Esophagus muscularis mucosa (tissue), 4 donors: ENCODE measurements at regions of chr9 and their contacts with region 1.

Region 1: DNA sequence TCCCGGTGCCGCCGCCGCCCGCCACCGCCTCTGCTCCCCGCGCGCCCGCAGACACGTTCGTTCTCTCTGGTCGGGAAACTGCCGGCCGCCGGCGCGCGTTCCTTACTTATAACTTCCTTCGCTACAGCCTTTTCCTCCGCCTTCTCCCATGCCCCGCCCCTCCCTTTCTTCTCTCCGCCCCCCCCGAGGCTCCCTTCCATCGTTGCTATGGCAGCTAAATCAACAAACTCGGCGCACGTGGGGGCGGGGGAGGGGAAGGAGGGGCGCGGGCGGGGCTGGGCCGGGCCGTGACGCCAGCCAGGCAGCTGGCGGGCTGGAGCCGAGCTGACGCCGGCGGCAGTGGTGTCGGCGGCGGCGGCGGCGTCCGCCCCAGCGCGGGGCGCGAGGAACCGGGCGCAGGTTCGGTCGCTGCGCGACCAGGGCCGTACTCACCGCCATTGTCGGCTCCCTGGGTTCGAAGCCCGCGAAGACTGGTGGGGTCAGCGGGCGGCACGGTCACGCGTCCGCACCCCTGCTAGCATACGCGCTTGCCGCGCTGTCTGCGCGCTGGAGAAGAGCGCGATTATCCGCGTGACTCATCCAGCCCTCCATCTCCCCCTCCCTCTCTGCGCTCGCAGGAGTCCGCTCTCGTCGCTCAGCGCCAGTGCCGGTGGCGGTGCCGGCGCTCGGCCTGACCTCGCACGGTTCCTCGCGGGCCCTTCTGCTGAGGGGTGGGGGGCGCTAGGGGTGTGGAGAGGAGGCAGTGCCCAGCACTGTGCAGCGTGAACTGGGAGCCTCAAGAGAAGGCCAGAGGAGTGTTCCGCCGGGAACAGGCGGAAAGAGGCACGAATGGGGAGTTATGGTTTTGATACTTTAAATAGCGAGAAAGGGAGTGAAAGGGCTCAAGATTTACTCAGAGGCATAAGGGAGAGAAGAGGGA is at the start of gene KLF4:
- DNase-seq: peak; percentile 99
- H3K4me3 ChIP-seq: peak within 1 kb of the TSS; percentile 80 to 94 (median 88)
- H3K27ac ChIP-seq: peak within 1 kb of the TSS; percentile 94 to 96 (median 95)
- H3K4me1 ChIP-seq: peaks cover 21 to 54% (median 52%) of the 10 kb centered on the region in 4 donors
- H3K27me3 ChIP-seq: no peaks in the 10 kb centered on the region
- CTCF ChIP-seq: no peak
- EP300 ChIP-seq: peak; percentile 15
- POLR2A ChIP-seq: peak; percentile 81
- total RNA-seq, gene KLF4: 41.9 to 87.5 (median 63.7) TPM

Region 2: DNA sequence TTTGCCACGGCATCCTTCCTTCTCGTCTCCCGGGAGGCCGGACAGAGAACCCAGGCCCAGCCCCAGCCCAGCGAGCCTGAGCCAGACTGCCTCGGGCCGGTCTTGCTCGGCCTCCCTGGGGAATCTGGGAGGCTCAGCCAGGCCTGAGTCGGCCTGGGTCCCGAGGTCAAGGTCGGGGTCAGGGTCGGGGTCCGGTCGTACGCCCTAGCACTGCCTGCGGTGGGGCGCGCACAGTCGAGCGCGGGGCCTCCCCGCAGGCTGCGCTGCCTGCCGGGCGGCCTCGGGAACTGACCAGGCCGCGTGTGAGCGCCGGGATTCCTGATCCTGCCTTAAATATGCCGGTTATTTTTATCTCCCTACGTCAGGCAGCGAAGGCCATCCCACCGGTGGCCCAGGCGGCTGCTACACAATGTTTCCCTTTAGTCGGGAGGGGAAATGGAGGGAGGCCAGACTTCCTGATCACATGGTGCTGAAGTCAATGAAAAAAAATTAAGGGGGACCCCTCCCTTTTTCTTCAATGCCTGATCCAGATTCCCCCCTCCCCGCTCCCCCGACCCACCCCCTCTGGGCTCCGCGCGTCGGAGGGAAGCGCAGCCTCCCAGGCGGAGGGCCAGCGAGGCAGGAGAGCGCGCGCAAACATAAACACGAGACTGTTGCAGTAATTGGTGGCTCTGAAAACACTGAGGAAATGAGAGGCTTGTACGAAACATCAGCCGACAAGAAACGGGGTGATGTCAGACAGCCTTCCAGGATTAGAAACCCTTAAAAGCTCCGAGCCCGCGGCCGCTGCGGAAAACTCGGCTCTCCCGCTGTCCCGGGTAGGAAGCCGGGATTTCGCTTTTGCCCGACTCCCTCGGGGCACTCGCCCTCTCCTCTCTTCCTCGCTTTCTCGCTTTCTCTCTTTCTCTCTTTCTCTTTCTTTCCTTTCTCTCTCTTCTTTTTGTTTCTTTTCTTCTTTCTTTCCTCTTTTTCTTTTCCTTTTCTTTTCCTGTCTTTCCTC is 147.8 kb after region 1 on chr9:
- intact Hi-C with region 1: loop called (anchors 1 kb)
- DNase-seq: peak; percentile 98
- H3K4me3 ChIP-seq: peak overlapping the region; percentile 50 to 62 (median 61)
- H3K27ac ChIP-seq: peak overlapping the region; percentile 97 to 98 (median 98)
- H3K4me1 ChIP-seq: peaks cover 22 to 32% (median 26%) of the 10 kb centered on the region in 4 donors
- H3K27me3 ChIP-seq: no peaks in the 10 kb centered on the region
- CTCF ChIP-seq: peak; percentile 11 to 52 (median 20)
- EP300 ChIP-seq: peak; percentile 53
- POLR2A ChIP-seq: peak; percentile 98

Region 3: GRCh38 chr9:107749787-107750444 is 260.0 kb after region 1 on chr9:
- intact Hi-C with region 1: loop called (anchors 2 kb)
- DNase-seq: no peak
- H3K4me3 ChIP-seq: no peak overlapping the region
- H3K27ac ChIP-seq: peak overlapping the region; percentile 86 to 88 (median 86)
- H3K4me1 ChIP-seq: peaks cover 30 to 52% (median 42%) of the 10 kb centered on the region in 4 donors
- H3K27me3 ChIP-seq: no peaks in the 10 kb centered on the region
- CTCF ChIP-seq: no peak
- EP300 ChIP-seq: no peak
- POLR2A ChIP-seq: no peak

Region 4: GRCh38 chr9:107983181-107983603 is 493.2 kb after region 1 on chr9:
- intact Hi-C with region 1: loop called (anchors 10 kb)
- DNase-seq: no peak
- H3K4me3 ChIP-seq: no peak overlapping the region
- H3K27ac ChIP-seq: peak overlapping the region in 1 of 4 donors; percentile 55
- H3K4me1 ChIP-seq: peaks cover 0 to 6% (median 3%) of the 10 kb centered on the region in 4 donors
- H3K27me3 ChIP-seq: no peaks in the 10 kb centered on the region
- CTCF ChIP-seq: no peak
- EP300 ChIP-seq: no peak
- POLR2A ChIP-seq: no peak

Region 5: GRCh38 chr9:108142504-108143201 is 652.7 kb after region 1 on chr9:
- intact Hi-C with region 1: loop called (anchors 2 kb)
- DNase-seq: peak; percentile 96
- H3K4me3 ChIP-seq: no peak overlapping the region
- H3K27ac ChIP-seq: peak overlapping the region; percentile 84 to 93 (median 89)
- H3K4me1 ChIP-seq: peaks cover 24 to 35% (median 29%) of the 10 kb centered on the region in 4 donors
- H3K27me3 ChIP-seq: no peaks in the 10 kb centered on the region
- CTCF ChIP-seq: peak in 2 of 3 experiments; percentile 12 to 41
- EP300 ChIP-seq: peak; percentile 96
- POLR2A ChIP-seq: no peak